ENCODE measurements at regions of chr10 and their contacts with region 1.

Region 1: DNA sequence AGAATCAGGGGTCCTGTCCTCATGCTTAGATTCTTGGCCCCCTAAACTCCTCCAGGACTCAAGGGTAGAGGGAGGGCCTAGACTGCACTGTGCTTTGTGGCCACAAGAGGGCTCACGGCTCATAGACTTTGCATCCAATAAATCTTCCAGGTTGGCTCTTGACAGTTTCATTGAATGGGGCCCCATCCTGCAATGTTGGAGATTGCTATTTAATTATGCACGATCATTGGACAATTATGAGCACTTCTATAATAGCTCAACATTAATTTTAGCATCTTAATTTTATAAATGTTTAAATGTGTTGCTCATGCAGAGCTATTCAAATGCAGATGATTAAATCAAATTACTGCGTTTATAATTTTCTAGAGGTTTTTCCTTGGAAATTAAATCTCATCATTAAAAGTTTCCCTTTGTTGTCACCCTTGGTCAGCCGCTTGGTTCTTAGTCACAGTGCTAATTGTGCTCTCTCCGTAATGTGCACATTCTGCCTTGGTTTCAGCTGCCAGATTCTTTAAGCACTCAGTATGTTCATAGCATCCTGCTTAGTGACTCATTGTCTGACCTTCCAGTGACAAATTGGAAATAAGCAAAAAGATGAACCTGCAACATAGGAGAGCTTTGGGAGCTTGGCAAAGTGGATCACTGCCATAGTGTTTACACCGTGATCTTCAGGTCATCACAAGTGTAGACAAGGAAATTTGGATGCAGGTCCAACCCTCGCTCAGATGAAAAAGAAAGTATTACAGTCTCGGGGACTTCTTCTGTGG is 33.4 kb upstream of the PLPP4 start:
- DNase-seq: peak; percentile 37
- H3K4me3 Mint-ChIP-seq: no peak overlapping the region
- H3K27ac Mint-ChIP-seq: no peak overlapping the region
- H3K4me1 Mint-ChIP-seq: no peaks in the 10 kb centered on the region
- H3K27me3 Mint-ChIP-seq: peaks cover 42% of the 10 kb centered on the region
- CTCF ChIP-seq: peak; percentile 75

Region 2: GRCh38 chr10:120375666-120376065 is 47.9 kb before region 1 on chr10:
- CTCF ChIA-PET with region 1: no interaction called
- intact Hi-C with region 1: no loop called
- DNase-seq: no peak
- H3K4me3 Mint-ChIP-seq: no peak overlapping the region
- H3K27ac Mint-ChIP-seq: no peak overlapping the region
- H3K4me1 Mint-ChIP-seq: no peaks in the 10 kb centered on the region
- H3K27me3 Mint-ChIP-seq: no peaks in the 10 kb centered on the region
- CTCF ChIP-seq: no peak

Region 3: GRCh38 chr10:120600871-120601649 is 177.4 kb after region 1 on chr10:
- CTCF ChIA-PET with region 1: no interaction called
- intact Hi-C with region 1: loop called (anchors 10 kb)
- DNase-seq: peak; percentile 28
- H3K4me3 Mint-ChIP-seq: no peak overlapping the region
- H3K27ac Mint-ChIP-seq: no peak overlapping the region
- H3K4me1 Mint-ChIP-seq: no peaks in the 10 kb centered on the region
- H3K27me3 Mint-ChIP-seq: no peaks in the 10 kb centered on the region
- CTCF ChIP-seq: no peak

Region 4: GRCh38 chr10:120735773-120736371 is 312.3 kb after region 1 on chr10:
- CTCF ChIA-PET with region 1: no interaction called
- intact Hi-C with region 1: loop called (anchors 1 kb)
- DNase-seq: no peak
- H3K4me3 Mint-ChIP-seq: no peak overlapping the region
- H3K27ac Mint-ChIP-seq: no peak overlapping the region
- H3K4me1 Mint-ChIP-seq: peaks cover 14% of the 10 kb centered on the region
- H3K27me3 Mint-ChIP-seq: peaks cover 25% of the 10 kb centered on the region
- CTCF ChIP-seq: peak; percentile 46

Measured in Calu3 (cell line).